ENCODE measurements at regions of chr13 and their contacts with region 1.

Region 1: DNA sequence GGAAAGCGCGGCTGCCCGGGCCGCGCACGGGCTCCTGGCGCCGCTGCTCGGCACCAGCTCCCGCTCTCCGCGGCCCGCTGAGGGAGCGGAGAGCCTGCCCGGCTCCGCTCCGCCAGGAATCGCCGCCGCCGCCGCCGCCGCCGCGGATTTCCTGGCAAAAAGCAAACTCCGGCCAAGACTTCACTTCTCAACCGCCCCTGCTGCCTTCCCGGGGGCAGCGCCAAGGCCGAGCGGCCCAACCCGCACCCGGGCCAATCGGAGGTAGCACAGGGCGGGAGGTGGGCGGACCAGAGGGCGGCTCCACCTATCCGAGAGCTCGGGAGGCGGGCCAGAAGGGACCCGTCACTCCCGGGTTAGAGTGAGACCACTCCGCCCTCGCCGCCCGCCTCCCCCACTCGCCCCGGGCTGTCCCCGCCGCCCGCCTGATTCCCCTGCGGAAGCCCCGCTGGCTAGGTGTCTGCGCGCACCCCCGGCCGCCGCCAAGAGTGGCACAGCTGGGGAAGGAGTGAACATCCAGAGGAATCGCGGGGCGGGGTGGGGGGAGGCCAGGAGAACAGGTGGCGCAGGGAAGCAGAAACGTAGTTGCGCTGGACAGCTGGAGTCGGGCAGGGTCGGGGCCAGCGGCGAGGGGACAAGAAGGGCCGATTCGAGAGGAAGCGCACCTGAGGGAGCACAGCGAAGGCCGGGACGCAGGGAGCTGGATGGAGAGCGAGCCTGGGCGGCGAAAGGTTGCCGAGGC is at the start of gene LNX2:
- DNase-seq: peak; percentile 98
- ATAC-seq: peak; percentile 91
- H3K4me3 Mint-ChIP-seq: peak within 1 kb of the TSS; percentile 86
- H3K27ac Mint-ChIP-seq: peak within 1 kb of the TSS; percentile 92
- H3K4me1 Mint-ChIP-seq: peaks cover 49% of the 10 kb centered on the region
- H3K27me3 Mint-ChIP-seq: no peaks in the 10 kb centered on the region
- CTCF ChIP-seq: no peak
- total RNA-seq, gene LNX2: 4.5 to 4.6 TPM

Region 2: GRCh38 chr13:27449936-27450828 is 170.4 kb before region 1 on chr13 and contains the start of gene MTIF3:
- CTCF ChIA-PET with region 1: interaction called, 4 read pairs
- POLR2A ChIA-PET with region 1: interaction called, 5 read pairs
- intact Hi-C with region 1: loop called (anchors 10 kb)
- DNase-seq: peak; percentile 98
- ATAC-seq: peak; percentile 86
- H3K4me3 Mint-ChIP-seq: peak within 1 kb of the TSS; percentile 82
- H3K27ac Mint-ChIP-seq: peak within 1 kb of the TSS; percentile 98
- H3K4me1 Mint-ChIP-seq: peaks cover 46% of the 10 kb centered on the region
- H3K27me3 Mint-ChIP-seq: no peaks in the 10 kb centered on the region
- CTCF ChIP-seq: no peak
- total RNA-seq, gene MTIF3: 28.0 to 29.6 TPM

Region 3: DNA sequence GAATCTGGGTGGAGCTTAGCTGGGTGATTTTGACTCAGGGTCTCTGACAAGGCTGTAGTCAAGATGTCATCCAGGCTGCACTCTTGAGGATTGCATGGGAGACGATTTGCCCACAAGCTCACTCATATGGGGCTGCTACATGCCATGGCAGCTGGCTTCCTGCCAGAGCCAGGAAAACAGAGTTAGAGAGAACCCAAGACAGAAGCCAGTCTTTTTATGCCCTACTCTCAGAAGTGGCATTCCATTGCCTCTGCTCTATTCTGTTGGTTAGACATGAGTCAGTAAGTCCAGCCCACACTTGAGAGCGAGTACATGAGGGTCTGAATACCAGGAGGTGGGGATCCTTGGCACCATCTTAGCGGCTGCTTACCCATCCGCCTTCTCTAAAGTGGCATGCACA is 10.6 kb after region 1 on chr13:
- CTCF ChIA-PET with region 1: no interaction called
- POLR2A ChIA-PET with region 1: interaction called, 16 read pairs
- intact Hi-C with region 1: no loop called
- DNase-seq: no peak
- ATAC-seq: no peak
- H3K4me3 Mint-ChIP-seq: no peak overlapping the region
- H3K27ac Mint-ChIP-seq: peak overlapping the region; percentile 8
- H3K4me1 Mint-ChIP-seq: peaks cover 56% of the 10 kb centered on the region
- H3K27me3 Mint-ChIP-seq: no peaks in the 10 kb centered on the region
- CTCF ChIP-seq: no peak

Region 4: DNA sequence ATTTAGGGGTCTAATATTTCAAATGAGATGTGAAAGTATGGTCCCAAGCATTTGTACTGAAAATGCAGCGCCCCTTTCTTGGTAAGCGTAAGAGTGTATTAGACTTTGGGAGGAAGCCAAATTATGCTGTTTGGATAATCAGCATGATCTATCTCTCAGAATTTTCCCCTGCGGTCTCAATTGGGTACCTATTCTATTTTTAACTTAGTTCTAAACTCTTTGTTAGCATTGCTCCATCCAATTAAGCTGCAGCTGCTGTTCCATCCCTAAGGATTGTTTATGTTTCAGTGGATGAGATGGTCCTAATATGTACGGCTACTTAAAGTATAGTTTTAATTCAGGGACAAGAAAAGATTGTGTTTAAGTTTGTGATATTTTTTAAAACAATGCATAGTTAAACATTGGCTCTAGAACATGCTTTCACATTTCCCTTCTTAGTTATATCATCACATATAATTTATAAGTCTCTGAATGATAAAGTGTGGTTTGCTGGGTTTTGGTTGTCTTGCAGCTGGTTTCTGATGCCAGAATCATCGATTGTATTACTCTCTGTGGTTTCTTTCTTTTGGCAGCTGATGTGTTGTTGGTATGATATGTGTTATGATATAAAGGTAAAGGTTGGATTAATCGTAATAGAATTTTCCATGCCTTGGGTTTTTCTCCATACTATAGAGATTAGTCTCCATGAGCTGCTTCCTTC is 16.2 kb after region 1 on chr13:
- CTCF ChIA-PET with region 1: interaction called, 3 read pairs
- POLR2A ChIA-PET with region 1: interaction called, 16 read pairs
- intact Hi-C with region 1: no loop called
- DNase-seq: no peak
- ATAC-seq: peak; percentile 20
- H3K4me3 Mint-ChIP-seq: no peak overlapping the region
- H3K27ac Mint-ChIP-seq: peak overlapping the region; percentile 32
- H3K4me1 Mint-ChIP-seq: peaks cover 37% of the 10 kb centered on the region
- H3K27me3 Mint-ChIP-seq: no peaks in the 10 kb centered on the region
- CTCF ChIP-seq: no peak

Region 5: DNA sequence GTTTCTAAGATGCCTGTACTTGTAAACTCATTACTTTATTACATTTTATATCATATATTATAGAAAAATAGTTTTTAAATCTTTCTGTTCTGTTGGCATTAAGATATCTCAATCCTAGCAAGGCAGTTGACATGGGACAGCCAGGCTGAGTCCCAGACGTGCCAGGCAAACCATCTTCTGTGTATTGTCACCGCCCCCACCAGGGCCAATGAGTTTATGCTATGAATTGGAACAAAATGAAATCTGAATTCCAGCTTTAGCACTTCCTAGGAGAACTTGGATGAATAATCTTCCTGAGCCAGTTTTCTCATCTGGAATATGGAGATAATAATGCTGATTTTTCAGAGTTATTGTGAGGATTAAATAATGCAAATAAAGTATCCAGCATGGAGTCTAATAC is 91.9 kb after region 1 on chr13:
- CTCF ChIA-PET with region 1: no interaction called
- POLR2A ChIA-PET with region 1: no interaction called
- intact Hi-C with region 1: no loop called
- DNase-seq: peak; percentile 21
- ATAC-seq: no peak
- H3K4me3 Mint-ChIP-seq: no peak overlapping the region
- H3K27ac Mint-ChIP-seq: no peak overlapping the region
- H3K4me1 Mint-ChIP-seq: no peaks in the 10 kb centered on the region
- H3K27me3 Mint-ChIP-seq: peaks cover 5% of the 10 kb centered on the region
- CTCF ChIP-seq: no peak